Natural killer cell (primary cell): ENCODE measurements at regions of chr4 and their contacts with region 1.

Region 1: GRCh38 chr4:176195184-176195978 is at the start of gene SPATA4:
- DNase-seq: peak; percentile 91 to 96
- ATAC-seq: peak; percentile 97
- H3K4me3 ChIP-seq: peak within 1 kb of the TSS; percentile 37
- H3K4me3 Mint-ChIP-seq: peak within 1 kb of the TSS; percentile 92
- H3K27ac ChIP-seq: peak within 1 kb of the TSS; percentile 16
- H3K27ac Mint-ChIP-seq: peak within 1 kb of the TSS; percentile 93 to 95
- H3K4me1 ChIP-seq: peaks cover 6% of the 10 kb centered on the region
- H3K4me1 Mint-ChIP-seq: peaks cover 9 to 10% of the 10 kb centered on the region in 2 donors
- H3K27me3 ChIP-seq: peaks cover 3% of the 10 kb centered on the region
- H3K27me3 Mint-ChIP-seq: peaks cover 12 to 17% of the 10 kb centered on the region in 2 donors
- CTCF ChIP-seq: no peak
- total RNA-seq, gene SPATA4: not detected

Region 2: DNA sequence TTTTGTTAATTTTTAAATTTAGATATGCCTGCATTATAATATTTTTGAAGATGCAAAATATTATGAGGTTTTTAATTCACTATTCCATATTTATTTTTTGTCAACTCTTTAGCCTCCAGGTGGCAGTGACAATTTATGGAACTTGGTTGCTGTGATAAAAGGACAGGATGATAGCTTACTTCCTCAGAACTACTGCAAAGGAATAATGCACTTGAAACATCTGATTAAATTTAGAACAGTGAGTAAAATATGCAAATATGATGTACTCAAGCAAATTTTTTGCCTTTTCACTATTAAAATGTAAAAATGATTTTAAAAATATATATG is 45.1 kb before region 1 on chr4:
- intact Hi-C with region 1: no loop called
- DNase-seq: peak in 1 of 2 donors; percentile 18
- ATAC-seq: no peak
- H3K4me3 ChIP-seq: no peak overlapping the region
- H3K4me3 Mint-ChIP-seq: no peak overlapping the region
- H3K27ac ChIP-seq: no peak overlapping the region
- H3K27ac Mint-ChIP-seq: no peak overlapping the region
- H3K4me1 ChIP-seq: no peaks in the 10 kb centered on the region
- H3K4me1 Mint-ChIP-seq: no peaks in the 10 kb centered on the region
- H3K27me3 ChIP-seq: no peaks in the 10 kb centered on the region
- H3K27me3 Mint-ChIP-seq: no peaks in the 10 kb centered on the region
- CTCF ChIP-seq: no peak

Region 3: GRCh38 chr4:176185067-176185466 is 10.3 kb before region 1 on chr4:
- intact Hi-C with region 1: no loop called
- DNase-seq: no peak
- ATAC-seq: no peak
- H3K4me3 ChIP-seq: no peak overlapping the region
- H3K4me3 Mint-ChIP-seq: no peak overlapping the region
- H3K27ac ChIP-seq: no peak overlapping the region
- H3K27ac Mint-ChIP-seq: no peak overlapping the region
- H3K4me1 ChIP-seq: no peaks in the 10 kb centered on the region
- H3K4me1 Mint-ChIP-seq: no peaks in the 10 kb centered on the region
- H3K27me3 ChIP-seq: peaks cover 7% of the 10 kb centered on the region
- H3K27me3 Mint-ChIP-seq: peaks cover 26 to 35% of the 10 kb centered on the region in 2 donors
- CTCF ChIP-seq: no peak

Region 4: DNA sequence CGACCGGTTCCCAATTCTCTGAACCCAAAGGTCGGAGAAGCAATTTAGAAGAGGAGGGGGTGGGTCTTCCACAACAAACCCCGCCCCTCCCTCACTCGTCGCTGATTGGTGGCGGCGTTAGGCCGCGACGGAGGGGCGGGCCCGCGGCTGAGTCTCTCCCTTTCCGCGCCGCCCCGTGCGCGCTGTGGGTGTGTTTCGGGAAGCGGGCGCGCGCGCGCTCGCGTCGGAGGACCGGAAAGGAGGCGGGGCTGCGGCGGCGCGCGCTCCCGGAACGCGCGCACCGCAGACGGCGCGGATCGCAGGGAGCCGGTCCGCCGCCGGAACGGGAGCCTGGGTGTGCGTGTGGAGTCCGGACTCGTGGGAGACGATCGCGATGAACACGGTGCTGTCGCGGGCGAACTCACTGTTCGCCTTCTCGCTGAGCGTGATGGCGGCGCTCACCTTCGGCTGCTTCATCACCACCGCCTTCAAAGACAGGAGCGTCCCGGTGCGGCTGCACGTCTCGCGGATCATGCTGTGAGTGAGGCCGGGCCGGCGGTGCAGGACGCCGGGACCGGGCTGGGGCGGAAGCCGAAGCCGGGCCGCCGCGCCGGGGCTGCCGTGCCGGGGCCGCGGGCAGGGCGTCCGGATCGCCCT is 124.4 kb after region 1 on chr4 and contains the start of gene SPCS3:
- intact Hi-C with region 1: loop called (anchors 1 kb)
- DNase-seq: peak; percentile 94 to 98
- ATAC-seq: peak; percentile 86 to 95 (median 86)
- H3K4me3 ChIP-seq: peak within 1 kb of the TSS; percentile 81
- H3K4me3 Mint-ChIP-seq: peak within 1 kb of the TSS; percentile 96
- H3K27ac ChIP-seq: peak within 1 kb of the TSS; percentile 95
- H3K27ac Mint-ChIP-seq: peak within 1 kb of the TSS; percentile 94 to 98
- H3K4me1 ChIP-seq: peaks cover 10% of the 10 kb centered on the region
- H3K4me1 Mint-ChIP-seq: peaks cover 50 to 51% of the 10 kb centered on the region in 2 donors
- H3K27me3 ChIP-seq: no peaks in the 10 kb centered on the region
- H3K27me3 Mint-ChIP-seq: no peaks in the 10 kb centered on the region
- CTCF ChIP-seq: no peak
- total RNA-seq, gene SPCS3: 157 to 204 (median 171) TPM

Region 5: GRCh38 chr4:176794151-176794550 is 598.8 kb after region 1 on chr4:
- intact Hi-C with region 1: no loop called
- DNase-seq: no peak
- ATAC-seq: no peak
- H3K4me3 ChIP-seq: no peak overlapping the region
- H3K4me3 Mint-ChIP-seq: no peak overlapping the region
- H3K27ac ChIP-seq: no peak overlapping the region
- H3K27ac Mint-ChIP-seq: no peak overlapping the region
- H3K4me1 ChIP-seq: no peaks in the 10 kb centered on the region
- H3K4me1 Mint-ChIP-seq: no peaks in the 10 kb centered on the region
- H3K27me3 ChIP-seq: peaks cover 12% of the 10 kb centered on the region
- H3K27me3 Mint-ChIP-seq: peaks cover 25 to 29% of the 10 kb centered on the region in 2 donors
- CTCF ChIP-seq: no peak